Endothelial cell of umbilical vein (primary cell): ENCODE measurements at regions of chr16 and their contacts with region 1.

Region 1: GRCh38 chr16:65624666-65625065 is 502.8 kb upstream of the CDH11 start:
- DNase-seq: no peak
- H3K4me3 ChIP-seq: no peak overlapping the region
- H3K27ac ChIP-seq: no peak overlapping the region
- H3K4me1 ChIP-seq: no peaks in the 10 kb centered on the region
- H3K27me3 ChIP-seq: no peaks in the 10 kb centered on the region
- CTCF ChIP-seq: no peak
- POLR2A ChIP-seq: no peak

Region 2: DNA sequence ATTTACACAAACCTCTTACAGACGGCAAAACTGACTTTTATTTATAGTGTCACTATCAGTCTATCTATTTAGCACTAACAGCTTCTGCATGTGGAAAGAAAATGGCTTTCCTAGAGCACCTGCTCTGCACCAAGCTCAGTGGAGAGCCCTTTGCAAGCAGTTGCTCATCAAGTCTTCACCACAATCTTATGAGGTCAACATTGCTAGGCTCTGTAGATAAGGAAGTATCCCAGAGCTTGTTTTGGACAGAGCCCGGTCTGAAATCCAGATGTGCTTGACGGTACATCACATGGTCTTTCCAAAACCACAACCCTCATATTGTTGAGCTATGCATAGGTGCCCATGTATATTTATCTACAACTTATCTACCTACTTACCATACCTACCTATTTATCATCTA is 169.1 kb after region 1 on chr16:
- CTCF ChIA-PET with region 1: no interaction called
- POLR2A ChIA-PET with region 1: no interaction called
- dilution Hi-C with region 1: no loop called
- intact Hi-C with region 1: no loop called
- DNase-seq: no peak
- H3K4me3 ChIP-seq: no peak overlapping the region
- H3K27ac ChIP-seq: no peak overlapping the region
- H3K4me1 ChIP-seq: no peaks in the 10 kb centered on the region
- H3K27me3 ChIP-seq: no peaks in the 10 kb centered on the region
- CTCF ChIP-seq: no peak
- POLR2A ChIP-seq: no peak

Region 3: GRCh38 chr16:66036793-66037715 is 412.4 kb after region 1 on chr16:
- CTCF ChIA-PET with region 1: no interaction called
- POLR2A ChIA-PET with region 1: no interaction called
- dilution Hi-C with region 1: no loop called
- intact Hi-C with region 1: loop called (anchors 10 kb)
- DNase-seq: no peak
- H3K4me3 ChIP-seq: no peak overlapping the region
- H3K27ac ChIP-seq: no peak overlapping the region
- H3K4me1 ChIP-seq: no peaks in the 10 kb centered on the region
- H3K27me3 ChIP-seq: no peaks in the 10 kb centered on the region
- CTCF ChIP-seq: no peak
- POLR2A ChIP-seq: no peak